Heart right ventricle (tissue), 16 donors: ENCODE measurements at regions of chr14 and their contacts with region 1.

Region 1: GRCh38 chr14:21257394-21257909 is 11.8 kb downstream of the HNRNPC start:
- DNase-seq: no peak
- ATAC-seq: peak in 2 of 8 donors; percentile 31 to 34
- H3K4me3 ChIP-seq: no peak overlapping the region
- H3K27ac ChIP-seq: peak overlapping the region in 2 of 10 donors; percentile 16 to 20
- H3K4me1 ChIP-seq: peaks cover 11 to 82% (median 74%) of the 10 kb centered on the region in 9 donors
- H3K27me3 ChIP-seq: no peaks in the 10 kb centered on the region
- CTCF ChIP-seq: no peak

Region 2: GRCh38 chr14:21220874-21221477 is 36.5 kb before region 1 on chr14:
- intact Hi-C with region 1: no loop called
- DNase-seq: no peak
- ATAC-seq: no peak
- H3K4me3 ChIP-seq: no peak overlapping the region
- H3K27ac ChIP-seq: no peak overlapping the region
- H3K4me1 ChIP-seq: peaks cover 0 to 81% (median 55%) of the 10 kb centered on the region in 9 donors
- H3K27me3 ChIP-seq: no peaks in the 10 kb centered on the region
- CTCF ChIP-seq: no peak

Region 3: GRCh38 chr14:21346549-21347135 is 89.2 kb after region 1 on chr14:
- intact Hi-C with region 1: no loop called
- DNase-seq: no peak
- ATAC-seq: no peak
- H3K4me3 ChIP-seq: no peak overlapping the region
- H3K27ac ChIP-seq: no peak overlapping the region
- H3K4me1 ChIP-seq: peaks cover 0 to 5% (median 0%) of the 10 kb centered on the region in 9 donors
- H3K27me3 ChIP-seq: no peaks in the 10 kb centered on the region
- CTCF ChIP-seq: no peak

Region 4: DNA sequence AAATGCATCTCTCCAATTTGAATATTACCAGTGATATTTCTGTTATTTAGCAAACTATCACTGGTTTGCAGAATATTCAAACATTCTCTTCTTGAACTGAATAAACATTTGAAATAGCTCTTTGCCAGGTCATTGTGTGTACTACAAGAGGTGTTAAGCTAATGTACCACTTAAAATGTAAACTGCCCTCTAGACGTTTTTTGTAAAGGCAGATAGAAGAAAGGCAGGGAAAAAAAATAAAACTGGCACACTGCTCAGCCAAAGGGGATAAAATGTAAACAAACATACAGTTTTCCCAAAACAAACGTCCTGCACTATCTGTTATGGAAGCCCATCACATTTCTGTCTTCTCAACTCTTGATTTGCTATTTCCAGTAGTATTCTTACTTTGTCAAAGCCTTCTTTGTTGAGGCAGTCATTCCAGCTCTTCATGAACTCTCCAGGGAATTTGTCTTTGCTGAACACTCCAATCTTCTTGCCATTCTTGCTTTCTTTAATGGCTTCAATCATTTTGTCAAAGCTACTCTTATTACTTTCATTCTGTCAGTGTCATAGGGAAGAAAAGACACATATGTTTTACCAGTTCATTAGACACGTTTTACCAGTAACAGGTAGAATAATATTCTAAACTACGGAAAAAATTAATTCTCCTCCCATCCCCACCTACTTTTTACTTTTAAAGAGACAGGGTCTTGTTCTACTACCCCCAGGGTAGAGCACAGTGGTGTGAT is 112.7 kb after region 1 on chr14:
- intact Hi-C with region 1: loop called in 1 of 10 experiments (anchors 10 kb)
- DNase-seq: no peak
- ATAC-seq: no peak
- H3K4me3 ChIP-seq: no peak overlapping the region
- H3K27ac ChIP-seq: no peak overlapping the region
- H3K4me1 ChIP-seq: no peaks in the 10 kb centered on the region
- H3K27me3 ChIP-seq: no peaks in the 10 kb centered on the region
- CTCF ChIP-seq: no peak